Activated naive CD4-positive, alpha-beta T cell treated with anti-CD3 and anti-CD28 coated beads for 36 hours (primary cell): ENCODE measurements at regions of chr18 and their contacts with region 1.

Region 1: GRCh38 chr18:77207540-77207939 is 42.1 kb upstream of the GALR1 start:
- DNase-seq: peak; percentile 74
- H3K4me3 Mint-ChIP-seq: no peak overlapping the region
- H3K27ac Mint-ChIP-seq: peak overlapping the region; percentile 71
- H3K4me1 Mint-ChIP-seq: peaks cover 32% of the 10 kb centered on the region
- H3K27me3 Mint-ChIP-seq: no peaks in the 10 kb centered on the region

Region 2: GRCh38 chr18:77000527-77000926 is 207.0 kb before region 1 on chr18:
- CTCF ChIA-PET with region 1: interaction called, 64 read pairs
- intact Hi-C with region 1: loop called (anchors 1 kb)
- DNase-seq: peak; percentile 60
- H3K4me3 Mint-ChIP-seq: no peak overlapping the region
- H3K27ac Mint-ChIP-seq: no peak overlapping the region
- H3K4me1 Mint-ChIP-seq: peaks cover 20% of the 10 kb centered on the region
- H3K27me3 Mint-ChIP-seq: no peaks in the 10 kb centered on the region

Region 3: GRCh38 chr18:77061946-77062517 is 145.5 kb before region 1 on chr18:
- CTCF ChIA-PET with region 1: interaction called, 9 read pairs
- intact Hi-C with region 1: loop called (anchors 2 kb)
- DNase-seq: peak; percentile 55
- H3K4me3 Mint-ChIP-seq: peak overlapping the region; percentile 11
- H3K27ac Mint-ChIP-seq: peak overlapping the region; percentile 98
- H3K4me1 Mint-ChIP-seq: peaks cover 78% of the 10 kb centered on the region
- H3K27me3 Mint-ChIP-seq: no peaks in the 10 kb centered on the region

Region 4: GRCh38 chr18:77132371-77133050 is 75.0 kb before region 1 on chr18 and contains the start of gene MBP:
- CTCF ChIA-PET with region 1: interaction called, 8 read pairs
- intact Hi-C with region 1: loop called (anchors 2 kb)
- DNase-seq: peak; percentile 78
- H3K4me3 Mint-ChIP-seq: peak within 1 kb of the TSS; percentile 90
- H3K27ac Mint-ChIP-seq: peak within 1 kb of the TSS; percentile 93
- H3K4me1 Mint-ChIP-seq: peaks cover 53% of the 10 kb centered on the region
- H3K27me3 Mint-ChIP-seq: no peaks in the 10 kb centered on the region
- total RNA-seq, gene MBP: 35.9 to 36.6 TPM

Region 5: GRCh38 chr18:77223653-77224052 is 16.1 kb after region 1 on chr18:
- CTCF ChIA-PET with region 1: interaction called, 5 read pairs
- intact Hi-C with region 1: loop called (anchors 2 kb)
- DNase-seq: no peak
- H3K4me3 Mint-ChIP-seq: no peak overlapping the region
- H3K27ac Mint-ChIP-seq: no peak overlapping the region
- H3K4me1 Mint-ChIP-seq: peaks cover 15% of the 10 kb centered on the region
- H3K27me3 Mint-ChIP-seq: peaks cover 1% of the 10 kb centered on the region